ENCODE measurements at regions of chr10 and their contacts with region 1.

Region 1: GRCh38 chr10:119305860-119306513 is 98.6 kb downstream of the GRK5 start:
- DNase-seq: peak; percentile 93
- ATAC-seq: peak; percentile 73
- H3K4me3 Mint-ChIP-seq: peak overlapping the region; percentile 72
- H3K27ac Mint-ChIP-seq: peak overlapping the region; percentile 100
- H3K4me1 Mint-ChIP-seq: peaks cover 79% of the 10 kb centered on the region
- H3K27me3 Mint-ChIP-seq: peaks cover 2% of the 10 kb centered on the region

Region 2: DNA sequence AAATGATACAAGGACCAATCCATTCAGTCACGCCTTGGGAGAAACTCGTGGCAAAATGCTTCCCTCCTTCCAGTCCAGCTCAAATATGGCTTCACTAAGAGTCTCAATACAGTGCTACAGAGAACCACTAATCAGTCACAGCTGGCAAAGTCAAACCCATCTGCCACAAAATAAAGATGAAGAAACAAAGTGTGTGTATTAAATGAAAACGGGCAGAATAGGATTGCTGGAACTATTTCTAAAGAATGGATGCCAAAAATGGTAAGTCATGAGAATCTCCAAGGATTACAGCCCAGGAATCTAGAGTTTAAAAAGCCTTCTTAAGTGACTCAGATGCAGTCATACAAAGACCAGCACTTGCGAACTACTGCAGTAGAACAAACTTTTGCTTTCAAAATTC is 613.1 kb before region 1 on chr10:
- CTCF ChIA-PET with region 1: no interaction called
- POLR2A ChIA-PET with region 1: no interaction called
- intact Hi-C with region 1: no loop called
- DNase-seq: no peak
- ATAC-seq: no peak
- H3K4me3 Mint-ChIP-seq: no peak overlapping the region
- H3K27ac Mint-ChIP-seq: no peak overlapping the region
- H3K4me1 Mint-ChIP-seq: peaks cover 25% of the 10 kb centered on the region
- H3K27me3 Mint-ChIP-seq: no peaks in the 10 kb centered on the region

Region 3: DNA sequence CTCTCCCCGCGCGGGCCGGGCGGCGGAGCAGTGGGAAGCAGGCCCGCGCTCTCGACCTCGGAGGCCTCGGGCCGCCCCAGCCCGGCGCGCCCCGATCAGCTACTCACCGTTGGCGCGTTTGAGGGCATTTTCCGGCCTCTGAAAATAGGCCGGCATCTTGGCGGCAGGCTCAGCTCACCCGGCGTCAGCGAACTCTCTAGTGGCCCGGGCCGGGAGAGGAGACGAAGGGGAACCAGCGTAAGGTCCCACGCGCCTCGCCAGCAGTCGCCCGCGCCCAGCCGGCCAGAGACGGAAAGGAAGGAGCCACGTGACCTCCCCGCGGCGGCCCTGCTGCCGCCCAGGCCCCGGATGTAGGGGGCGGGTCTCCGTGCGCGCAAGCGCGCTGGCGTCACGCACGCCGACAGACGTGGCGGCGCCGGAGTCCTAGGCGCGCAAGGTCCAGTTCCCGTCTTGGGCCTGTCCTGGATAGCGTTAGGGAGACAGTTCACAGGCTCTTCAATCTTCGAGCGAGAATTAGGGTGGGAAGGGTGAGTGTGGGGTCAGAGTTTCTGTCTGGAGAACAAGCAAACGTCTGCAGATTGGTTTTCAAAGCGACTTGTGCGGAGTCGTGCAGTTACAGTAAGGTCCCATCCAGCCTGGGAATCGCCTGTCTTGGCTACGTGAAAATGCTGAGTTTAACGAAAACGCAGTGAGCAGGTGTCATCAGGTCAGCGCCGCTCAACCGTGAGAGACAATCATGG is 225.3 kb before region 1 on chr10 and contains the start of gene EIF3A:
- CTCF ChIA-PET with region 1: no interaction called
- POLR2A ChIA-PET with region 1: no interaction called
- intact Hi-C with region 1: loop called in 1 of 2 experiments (anchors 1 kb)
- DNase-seq: peak; percentile 95
- ATAC-seq: peak; percentile 82
- H3K4me3 Mint-ChIP-seq: peak within 1 kb of the TSS; percentile 99
- H3K27ac Mint-ChIP-seq: peak within 1 kb of the TSS; percentile 94
- H3K4me1 Mint-ChIP-seq: peaks cover 26% of the 10 kb centered on the region
- H3K27me3 Mint-ChIP-seq: no peaks in the 10 kb centered on the region
- total RNA-seq, gene EIF3A: 132 to 150 TPM

Region 4: GRCh38 chr10:119253433-119254174 is 52.4 kb before region 1 on chr10:
- CTCF ChIA-PET with region 1: no interaction called
- POLR2A ChIA-PET with region 1: no interaction called
- intact Hi-C with region 1: loop called (anchors 1 to 5 kb)
- DNase-seq: peak; percentile 81
- ATAC-seq: peak; percentile 82
- H3K4me3 Mint-ChIP-seq: no peak overlapping the region
- H3K27ac Mint-ChIP-seq: peak overlapping the region; percentile 88
- H3K4me1 Mint-ChIP-seq: peaks cover 55% of the 10 kb centered on the region
- H3K27me3 Mint-ChIP-seq: no peaks in the 10 kb centered on the region

Region 5: GRCh38 chr10:119323085-119324016 is 17.4 kb after region 1 on chr10:
- CTCF ChIA-PET with region 1: no interaction called
- POLR2A ChIA-PET with region 1: no interaction called
- intact Hi-C with region 1: no loop called
- DNase-seq: no peak
- ATAC-seq: no peak
- H3K4me3 Mint-ChIP-seq: no peak overlapping the region
- H3K27ac Mint-ChIP-seq: no peak overlapping the region
- H3K4me1 Mint-ChIP-seq: peaks cover 16% of the 10 kb centered on the region
- H3K27me3 Mint-ChIP-seq: no peaks in the 10 kb centered on the region

Region 6: DNA sequence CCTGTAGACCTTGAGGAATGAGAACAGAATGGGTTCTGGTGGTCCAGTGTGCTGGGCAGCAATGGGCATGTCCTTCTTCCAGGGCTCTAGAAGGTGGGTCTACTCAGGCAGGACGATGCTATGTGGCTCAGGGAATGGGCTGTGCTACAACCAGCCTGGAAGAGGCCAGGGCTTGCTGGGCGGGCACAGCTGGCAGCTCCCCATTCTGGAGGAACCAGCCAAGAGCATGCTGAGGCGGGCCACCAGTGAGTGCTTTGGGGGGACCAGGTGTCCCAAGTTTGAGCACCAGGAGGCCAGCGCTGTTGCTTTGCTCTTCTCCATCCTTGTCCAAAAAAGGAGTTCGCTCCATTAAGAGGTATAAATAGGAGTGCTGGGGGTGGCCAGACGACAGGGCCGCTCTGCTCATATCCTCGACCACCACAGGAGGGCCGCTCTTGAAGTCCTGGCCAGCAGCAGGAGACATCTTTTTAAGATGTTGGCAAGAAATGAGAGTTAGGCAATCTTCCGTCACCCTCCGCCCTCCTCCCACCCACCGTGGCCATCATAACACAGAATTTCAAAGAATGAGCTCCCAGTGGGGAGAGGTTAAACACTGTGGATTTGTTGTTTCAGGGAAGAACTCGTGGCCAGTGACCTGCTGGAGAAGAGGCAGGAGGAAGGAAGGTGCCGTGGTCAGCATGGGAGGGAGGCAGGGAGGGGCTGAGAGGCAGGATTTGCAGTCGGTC is 42.7 kb after region 1 on chr10:
- CTCF ChIA-PET with region 1: no interaction called
- POLR2A ChIA-PET with region 1: no interaction called
- intact Hi-C with region 1: no loop called
- DNase-seq: no peak
- ATAC-seq: no peak
- H3K4me3 Mint-ChIP-seq: no peak overlapping the region
- H3K27ac Mint-ChIP-seq: no peak overlapping the region
- H3K4me1 Mint-ChIP-seq: peaks cover 6% of the 10 kb centered on the region
- H3K27me3 Mint-ChIP-seq: no peaks in the 10 kb centered on the region

Region 7: GRCh38 chr10:119461380-119461779 is 155.4 kb after region 1 on chr10:
- CTCF ChIA-PET with region 1: no interaction called
- POLR2A ChIA-PET with region 1: no interaction called
- intact Hi-C with region 1: no loop called
- DNase-seq: peak; percentile 34
- ATAC-seq: peak; percentile 90
- H3K4me3 Mint-ChIP-seq: no peak overlapping the region
- H3K27ac Mint-ChIP-seq: no peak overlapping the region
- H3K4me1 Mint-ChIP-seq: peaks cover 5% of the 10 kb centered on the region
- H3K27me3 Mint-ChIP-seq: no peaks in the 10 kb centered on the region

Region 8: DNA sequence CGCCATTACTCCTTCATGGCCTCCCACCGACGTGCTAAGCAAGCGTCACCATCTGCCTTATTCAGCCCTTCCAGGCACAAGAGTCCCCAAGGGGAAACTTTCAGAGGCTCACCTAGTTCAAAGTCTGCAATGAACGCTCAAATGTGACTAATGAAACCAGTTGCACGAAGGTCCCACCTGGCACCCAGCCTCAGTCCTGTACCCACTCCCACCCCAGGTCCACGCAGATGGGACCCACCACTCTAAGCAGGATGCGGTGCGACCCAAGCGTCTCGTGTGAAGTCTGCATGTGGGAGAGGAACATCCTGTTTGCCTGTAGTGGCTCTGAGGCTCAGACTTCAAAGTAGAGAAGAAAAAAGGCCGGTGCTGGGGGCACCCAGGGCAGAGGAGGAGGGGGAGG is 196.2 kb after region 1 on chr10:
- CTCF ChIA-PET with region 1: no interaction called
- POLR2A ChIA-PET with region 1: no interaction called
- intact Hi-C with region 1: loop called in 1 of 2 experiments (anchors 1 kb)
- DNase-seq: peak; percentile 87
- ATAC-seq: peak; percentile 78
- H3K4me3 Mint-ChIP-seq: peak overlapping the region; percentile 56
- H3K27ac Mint-ChIP-seq: peak overlapping the region; percentile 98
- H3K4me1 Mint-ChIP-seq: peaks cover 96% of the 10 kb centered on the region
- H3K27me3 Mint-ChIP-seq: no peaks in the 10 kb centered on the region

Region 9: GRCh38 chr10:119596537-119597404 is 290.8 kb after region 1 on chr10 and contains the start of gene TIAL1:
- CTCF ChIA-PET with region 1: no interaction called
- POLR2A ChIA-PET with region 1: no interaction called
- intact Hi-C with region 1: loop called in 1 of 2 experiments (anchors 2 kb)
- DNase-seq: peak; percentile 96
- ATAC-seq: peak; percentile 90
- H3K4me3 Mint-ChIP-seq: peak within 1 kb of the TSS; percentile 92
- H3K27ac Mint-ChIP-seq: peak within 1 kb of the TSS; percentile 93
- H3K4me1 Mint-ChIP-seq: peaks cover 49% of the 10 kb centered on the region
- H3K27me3 Mint-ChIP-seq: no peaks in the 10 kb centered on the region
- total RNA-seq, gene TIAL1: 187 to 197 TPM

Region 10: DNA sequence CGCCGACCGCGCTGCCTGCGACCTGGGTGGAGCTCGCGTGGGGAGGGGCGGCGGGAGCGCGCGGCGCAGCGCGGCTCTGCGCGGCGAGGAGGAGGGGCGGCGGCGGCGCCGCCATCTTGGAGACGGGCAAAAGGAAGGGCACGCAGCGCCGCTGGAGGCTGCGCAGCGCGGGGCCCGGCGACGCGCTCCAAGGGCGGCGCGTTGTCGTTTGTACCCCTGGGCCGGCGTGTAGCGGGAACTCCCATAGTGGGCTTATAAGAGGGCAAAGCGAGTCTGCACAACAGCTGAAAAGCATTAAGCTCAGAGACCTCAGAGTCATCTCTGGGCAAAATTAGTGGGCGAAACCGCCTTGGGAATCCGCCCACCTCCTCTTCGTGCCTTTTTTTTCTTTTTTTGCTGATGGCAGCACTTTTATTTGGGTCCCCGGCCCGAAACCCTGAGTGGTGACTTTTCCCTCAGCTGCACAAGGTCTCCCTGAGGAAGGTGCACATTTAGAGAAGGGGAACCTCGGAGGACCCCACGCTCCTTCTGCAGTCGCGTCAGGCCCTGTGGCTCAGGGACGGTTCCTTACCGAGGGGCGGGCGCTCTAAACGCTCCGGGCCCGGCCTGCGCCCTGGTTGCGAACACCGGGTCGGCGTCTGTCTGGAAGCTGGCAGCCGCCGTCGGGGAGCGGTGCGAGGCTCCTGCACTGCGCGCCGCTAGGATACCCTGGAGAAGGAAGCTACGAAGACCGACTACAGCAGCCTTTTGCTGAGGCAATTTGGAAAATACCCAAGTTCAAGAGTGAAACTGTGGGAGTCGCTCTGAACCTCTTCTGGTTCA is 567.1 kb after region 1 on chr10:
- CTCF ChIA-PET with region 1: interaction called, 3 read pairs
- POLR2A ChIA-PET with region 1: no interaction called
- intact Hi-C with region 1: loop called in 1 of 2 experiments (anchors 2 kb)
- DNase-seq: peak; percentile 94
- ATAC-seq: peak; percentile 95
- H3K4me3 Mint-ChIP-seq: peak overlapping the region; percentile 79
- H3K27ac Mint-ChIP-seq: peak overlapping the region; percentile 87
- H3K4me1 Mint-ChIP-seq: peaks cover 33% of the 10 kb centered on the region
- H3K27me3 Mint-ChIP-seq: no peaks in the 10 kb centered on the region

Measured in activated CD4-positive, alpha-beta T cell treated with anti-CD3 and anti-CD28 coated beads for 36 hours (primary cell).